Activated naive CD4-positive, alpha-beta T cell treated with anti-CD3 and anti-CD28 coated beads for 36 hours (primary cell): ENCODE measurements at regions of chr6 and their contacts with region 1.

Region 1: DNA sequence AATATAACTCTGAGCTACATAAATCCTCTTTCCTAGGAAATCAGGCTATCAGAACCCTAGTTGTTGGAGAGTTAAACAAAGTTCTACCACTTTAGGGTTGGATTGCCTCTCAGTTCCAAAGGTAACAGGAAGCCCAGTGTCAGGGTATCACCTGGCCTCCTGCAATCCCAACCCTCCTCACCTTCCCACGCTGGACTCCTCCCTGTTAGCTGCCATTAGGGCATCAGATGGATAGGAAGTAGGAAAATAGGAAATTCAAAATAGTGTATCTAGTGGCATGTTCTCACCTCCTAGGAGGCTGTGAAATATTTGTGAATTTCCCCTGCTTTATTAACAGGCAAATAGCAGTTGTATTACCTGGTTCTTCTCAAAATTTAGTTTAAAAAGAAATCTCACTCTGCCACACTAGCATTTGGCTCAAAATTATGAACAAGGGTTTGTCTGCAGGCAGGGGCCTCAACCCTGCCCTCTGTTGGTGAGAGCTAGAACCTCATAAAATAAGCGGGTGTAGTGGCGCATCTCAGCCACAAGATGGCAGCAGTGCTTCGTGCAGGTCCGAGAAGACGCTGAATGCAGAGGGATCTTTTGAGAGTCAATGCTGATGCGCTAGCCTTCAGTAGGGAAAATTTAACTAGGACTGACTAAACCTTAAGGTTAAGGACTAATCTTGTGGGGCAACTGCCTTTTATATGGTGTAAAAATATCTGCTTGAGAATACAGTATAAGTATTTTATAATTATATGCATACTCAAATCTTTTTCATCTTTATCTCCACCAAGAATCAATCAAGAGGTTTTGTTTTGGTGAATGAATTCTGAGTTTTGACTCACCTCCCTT is 209.8 kb upstream of the KCNQ5 start:
- DNase-seq: peak; percentile 82
- H3K4me3 Mint-ChIP-seq: no peak overlapping the region
- H3K27ac Mint-ChIP-seq: no peak overlapping the region
- H3K4me1 Mint-ChIP-seq: no peaks in the 10 kb centered on the region
- H3K27me3 Mint-ChIP-seq: peaks cover 4% of the 10 kb centered on the region

Region 2: GRCh38 chr6:72440611-72441010 is 28.5 kb after region 1 on chr6:
- CTCF ChIA-PET with region 1: interaction called, 10 read pairs
- intact Hi-C with region 1: no loop called
- DNase-seq: no peak
- H3K4me3 Mint-ChIP-seq: no peak overlapping the region
- H3K27ac Mint-ChIP-seq: no peak overlapping the region
- H3K4me1 Mint-ChIP-seq: no peaks in the 10 kb centered on the region
- H3K27me3 Mint-ChIP-seq: peaks cover 4% of the 10 kb centered on the region

Region 3: GRCh38 chr6:72464791-72465691 is 53.0 kb after region 1 on chr6:
- CTCF ChIA-PET with region 1: no interaction called
- intact Hi-C with region 1: no loop called
- DNase-seq: no peak
- H3K4me3 Mint-ChIP-seq: no peak overlapping the region
- H3K27ac Mint-ChIP-seq: no peak overlapping the region
- H3K4me1 Mint-ChIP-seq: no peaks in the 10 kb centered on the region
- H3K27me3 Mint-ChIP-seq: peaks cover 7% of the 10 kb centered on the region

Region 4: GRCh38 chr6:72616406-72617015 is 204.4 kb after region 1 on chr6:
- CTCF ChIA-PET with region 1: interaction called, 23 read pairs
- intact Hi-C with region 1: loop called (anchors 1 kb)
- DNase-seq: no peak
- H3K4me3 Mint-ChIP-seq: no peak overlapping the region
- H3K27ac Mint-ChIP-seq: no peak overlapping the region
- H3K4me1 Mint-ChIP-seq: peaks cover 52% of the 10 kb centered on the region
- H3K27me3 Mint-ChIP-seq: no peaks in the 10 kb centered on the region

Region 5: GRCh38 chr6:73129653-73130443 is 717.8 kb after region 1 on chr6:
- CTCF ChIA-PET with region 1: interaction called, 30 read pairs
- intact Hi-C with region 1: loop called (anchors 1 kb)
- DNase-seq: peak; percentile 94
- H3K4me3 Mint-ChIP-seq: peak overlapping the region; percentile 36
- H3K27ac Mint-ChIP-seq: no peak overlapping the region
- H3K4me1 Mint-ChIP-seq: peaks cover 4% of the 10 kb centered on the region
- H3K27me3 Mint-ChIP-seq: no peaks in the 10 kb centered on the region

Region 6: GRCh38 chr6:73262671-73263569 is 850.8 kb after region 1 on chr6 and contains the start of gene KHDC1:
- CTCF ChIA-PET with region 1: no interaction called
- intact Hi-C with region 1: loop called (anchors 1 kb)
- DNase-seq: peak; percentile 65
- H3K4me3 Mint-ChIP-seq: peak within 1 kb of the TSS; percentile 80
- H3K27ac Mint-ChIP-seq: peak within 1 kb of the TSS; percentile 56
- H3K4me1 Mint-ChIP-seq: peaks cover 30% of the 10 kb centered on the region
- H3K27me3 Mint-ChIP-seq: no peaks in the 10 kb centered on the region
- total RNA-seq, gene KHDC1: 1.1 to 1.6 TPM

Region 7: DNA sequence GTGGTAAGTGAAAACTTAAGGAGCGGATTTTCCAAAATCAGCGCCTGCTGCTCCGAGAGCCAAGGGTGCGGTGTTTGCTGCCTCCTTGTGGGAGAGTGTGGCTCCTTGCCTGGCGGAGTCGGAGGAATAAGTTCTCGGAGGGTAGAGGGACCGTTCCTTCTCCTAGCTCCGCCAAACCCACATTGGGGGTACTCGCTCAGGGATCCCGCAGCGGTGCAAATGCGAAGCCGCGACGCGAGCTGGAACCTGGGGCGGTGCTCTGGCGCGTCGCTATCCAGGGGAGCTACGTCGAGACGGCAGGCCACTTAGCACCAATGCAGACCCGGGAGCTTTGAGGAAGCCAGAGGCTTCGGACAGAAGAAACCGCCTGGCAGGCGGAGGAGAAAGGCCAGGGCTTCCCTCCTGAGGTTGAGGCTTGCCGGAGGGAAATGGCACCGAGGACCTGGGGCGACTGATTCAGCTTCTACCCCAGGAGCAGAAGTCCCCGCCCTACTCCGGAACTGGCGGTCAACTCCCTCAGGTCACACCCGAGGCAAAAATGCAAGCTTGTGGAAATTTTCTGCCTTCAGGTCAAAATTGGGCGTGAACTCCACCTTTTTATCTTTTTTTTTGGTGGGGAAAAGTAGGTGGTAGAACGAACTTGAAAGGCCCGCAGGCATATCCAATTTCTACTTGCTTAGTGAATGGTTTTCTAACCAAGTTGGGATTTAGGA is 976.9 kb after region 1 on chr6:
- CTCF ChIA-PET with region 1: no interaction called
- intact Hi-C with region 1: loop called (anchors 1 kb)
- DNase-seq: peak; percentile 64
- H3K4me3 Mint-ChIP-seq: peak overlapping the region; percentile 73
- H3K27ac Mint-ChIP-seq: no peak overlapping the region
- H3K4me1 Mint-ChIP-seq: peaks cover 4% of the 10 kb centered on the region
- H3K27me3 Mint-ChIP-seq: peaks cover 3% of the 10 kb centered on the region